Activated CD4-positive, alpha-beta T cell treated with anti-CD3 and anti-CD28 coated beads for 36 hours (primary cell): ENCODE measurements at regions of chr4 and their contacts with region 1.

Region 1: DNA sequence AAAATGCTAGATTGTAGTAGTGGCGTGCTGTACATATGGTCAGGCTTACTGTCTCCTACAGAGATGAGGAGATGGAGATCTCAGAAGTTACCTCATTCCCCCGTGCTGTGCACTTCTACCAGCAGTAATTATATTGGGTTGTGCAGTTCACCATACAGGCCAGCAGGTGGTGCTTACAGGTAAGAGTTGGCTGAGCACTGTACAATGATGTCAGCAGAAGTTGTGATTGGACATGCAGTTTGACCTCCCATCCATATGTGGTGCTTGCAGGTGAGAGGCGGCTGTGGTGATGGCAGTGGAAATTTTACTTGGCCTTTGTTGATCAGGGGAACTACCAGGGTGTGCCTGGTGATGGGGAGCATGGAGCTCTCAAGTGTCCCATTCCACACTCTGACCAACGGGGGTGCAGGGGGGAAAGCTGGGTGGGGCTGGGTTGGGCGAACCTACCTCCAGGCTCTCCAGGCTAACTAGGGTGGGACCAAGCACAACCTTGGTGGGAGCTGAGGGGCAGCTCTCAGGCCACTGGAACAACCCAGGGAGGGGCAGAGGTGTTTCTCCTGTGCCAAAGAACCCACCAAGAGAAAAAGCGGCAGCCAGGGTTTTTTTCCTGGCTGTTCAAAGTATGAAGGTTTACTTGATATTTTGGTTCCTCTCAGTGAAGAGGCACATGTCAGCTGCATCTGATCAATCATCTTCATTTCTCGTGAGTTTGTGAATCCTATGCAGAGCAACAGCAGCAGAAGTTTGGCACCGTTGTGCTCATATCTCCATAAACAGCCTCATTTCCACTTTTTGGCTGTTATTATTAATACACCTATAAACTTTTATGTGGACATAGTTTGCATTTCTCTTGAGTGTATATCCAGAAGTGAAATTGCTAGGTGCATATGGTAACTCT is 73.8 kb upstream of the FREM3 start:
- DNase-seq: peak; percentile 65
- ATAC-seq: peak; percentile 92
- H3K4me3 Mint-ChIP-seq: no peak overlapping the region
- H3K27ac Mint-ChIP-seq: no peak overlapping the region
- H3K4me1 Mint-ChIP-seq: no peaks in the 10 kb centered on the region
- H3K27me3 Mint-ChIP-seq: peaks cover 4% of the 10 kb centered on the region

Region 2: GRCh38 chr4:143286701-143287571 is 487.3 kb before region 1 on chr4:
- CTCF ChIA-PET with region 1: no interaction called
- POLR2A ChIA-PET with region 1: no interaction called
- intact Hi-C with region 1: no loop called
- DNase-seq: no peak
- ATAC-seq: no peak
- H3K4me3 Mint-ChIP-seq: no peak overlapping the region
- H3K27ac Mint-ChIP-seq: no peak overlapping the region
- H3K4me1 Mint-ChIP-seq: no peaks in the 10 kb centered on the region
- H3K27me3 Mint-ChIP-seq: peaks cover 2% of the 10 kb centered on the region

Region 3: DNA sequence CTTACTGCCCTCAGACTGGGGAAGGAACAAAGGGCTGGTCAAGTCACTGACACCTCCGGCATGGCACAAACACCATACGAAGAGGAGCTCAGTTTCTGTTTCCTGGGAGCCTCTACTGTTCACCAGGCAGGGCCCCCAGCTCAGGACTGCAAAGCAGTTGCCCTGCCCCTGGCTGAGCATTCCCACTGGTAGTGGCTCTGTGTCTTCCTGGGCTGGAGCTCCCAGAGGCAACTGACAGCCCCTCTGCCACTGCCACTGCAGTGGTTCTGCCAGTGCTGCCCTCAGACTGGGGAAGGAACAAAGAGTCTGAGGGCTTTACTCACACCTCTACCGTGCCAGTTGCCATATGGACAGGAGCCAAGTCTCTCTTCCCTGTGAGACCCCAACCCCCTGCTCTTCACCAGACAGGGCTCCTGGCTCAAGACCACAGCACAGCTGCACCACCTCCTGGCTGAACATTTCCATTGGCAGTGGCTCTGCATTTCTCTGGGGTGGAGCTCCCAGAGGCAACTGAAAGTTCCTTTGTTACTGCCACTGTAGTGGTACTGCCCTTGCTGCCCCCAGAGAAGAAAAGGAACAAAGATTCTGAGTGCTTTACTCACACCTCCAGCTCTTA is 192.8 kb before region 1 on chr4:
- CTCF ChIA-PET with region 1: no interaction called
- POLR2A ChIA-PET with region 1: no interaction called
- intact Hi-C with region 1: no loop called
- DNase-seq: no peak
- ATAC-seq: no peak
- H3K4me3 Mint-ChIP-seq: no peak overlapping the region
- H3K27ac Mint-ChIP-seq: no peak overlapping the region
- H3K4me1 Mint-ChIP-seq: no peaks in the 10 kb centered on the region
- H3K27me3 Mint-ChIP-seq: no peaks in the 10 kb centered on the region

Region 4: DNA sequence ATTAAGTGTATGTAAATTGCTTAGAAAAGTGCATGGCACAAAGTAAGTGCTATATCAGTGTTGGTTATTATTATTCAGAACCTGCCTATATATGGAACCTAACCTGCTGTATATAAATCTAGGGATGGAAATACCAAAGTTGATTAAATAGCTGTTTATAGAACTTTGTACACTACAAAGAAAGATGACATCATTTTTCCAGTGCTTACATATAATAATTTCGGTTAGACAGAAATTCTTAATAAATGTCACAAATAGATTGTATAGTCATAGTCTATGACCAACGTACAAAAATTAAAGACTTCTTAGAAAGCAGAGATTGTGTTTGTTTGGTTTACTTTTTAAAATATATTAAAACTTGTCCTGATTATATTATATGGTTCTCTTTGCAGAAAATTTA is 240.6 kb after region 1 on chr4:
- CTCF ChIA-PET with region 1: interaction called, 5 read pairs
- POLR2A ChIA-PET with region 1: no interaction called
- intact Hi-C with region 1: loop called in 1 of 2 experiments (anchors 2 kb)
- DNase-seq: no peak
- ATAC-seq: no peak
- H3K4me3 Mint-ChIP-seq: no peak overlapping the region
- H3K27ac Mint-ChIP-seq: no peak overlapping the region
- H3K4me1 Mint-ChIP-seq: no peaks in the 10 kb centered on the region
- H3K27me3 Mint-ChIP-seq: no peaks in the 10 kb centered on the region

Region 5: DNA sequence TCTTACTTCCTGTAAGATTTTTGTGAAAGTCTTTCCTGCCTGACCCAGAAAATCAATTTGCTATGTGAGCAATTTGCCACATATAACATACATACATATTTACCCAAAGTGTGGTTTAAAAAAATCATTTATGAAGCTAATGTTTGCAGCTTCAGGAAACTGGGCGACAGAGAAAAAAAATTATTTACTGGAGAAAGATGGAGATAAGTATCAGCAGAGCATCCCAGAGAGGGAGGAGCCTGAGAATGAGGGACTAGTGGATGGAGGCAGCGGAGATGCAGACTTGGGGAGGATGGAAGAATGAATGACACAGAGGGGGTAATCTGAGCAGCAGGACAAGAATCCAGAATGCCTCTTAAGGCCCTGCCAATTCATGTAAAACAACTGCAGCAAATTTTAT is 367.2 kb after region 1 on chr4:
- CTCF ChIA-PET with region 1: no interaction called
- POLR2A ChIA-PET with region 1: no interaction called
- intact Hi-C with region 1: loop called (anchors 5 to 10 kb)
- DNase-seq: no peak
- ATAC-seq: no peak
- H3K4me3 Mint-ChIP-seq: no peak overlapping the region
- H3K27ac Mint-ChIP-seq: no peak overlapping the region
- H3K4me1 Mint-ChIP-seq: no peaks in the 10 kb centered on the region
- H3K27me3 Mint-ChIP-seq: no peaks in the 10 kb centered on the region